OCI-LY7 (cell line): ENCODE measurements at regions of chr10 and their contacts with region 1.

Region 1: GRCh38 chr10:37976091-37976879 is at the start of gene ZNF25:
- DNase-seq: peak; percentile 99
- H3K4me3 ChIP-seq: peak within 1 kb of the TSS; percentile 82
- H3K27ac ChIP-seq: peak within 1 kb of the TSS; percentile 78
- H3K4me1 ChIP-seq: peaks cover 17% of the 10 kb centered on the region
- CTCF ChIP-seq: peak; percentile 91
- total RNA-seq, gene ZNF25: 2.2 and 2.4 TPM in 2 replicates

Region 2: DNA sequence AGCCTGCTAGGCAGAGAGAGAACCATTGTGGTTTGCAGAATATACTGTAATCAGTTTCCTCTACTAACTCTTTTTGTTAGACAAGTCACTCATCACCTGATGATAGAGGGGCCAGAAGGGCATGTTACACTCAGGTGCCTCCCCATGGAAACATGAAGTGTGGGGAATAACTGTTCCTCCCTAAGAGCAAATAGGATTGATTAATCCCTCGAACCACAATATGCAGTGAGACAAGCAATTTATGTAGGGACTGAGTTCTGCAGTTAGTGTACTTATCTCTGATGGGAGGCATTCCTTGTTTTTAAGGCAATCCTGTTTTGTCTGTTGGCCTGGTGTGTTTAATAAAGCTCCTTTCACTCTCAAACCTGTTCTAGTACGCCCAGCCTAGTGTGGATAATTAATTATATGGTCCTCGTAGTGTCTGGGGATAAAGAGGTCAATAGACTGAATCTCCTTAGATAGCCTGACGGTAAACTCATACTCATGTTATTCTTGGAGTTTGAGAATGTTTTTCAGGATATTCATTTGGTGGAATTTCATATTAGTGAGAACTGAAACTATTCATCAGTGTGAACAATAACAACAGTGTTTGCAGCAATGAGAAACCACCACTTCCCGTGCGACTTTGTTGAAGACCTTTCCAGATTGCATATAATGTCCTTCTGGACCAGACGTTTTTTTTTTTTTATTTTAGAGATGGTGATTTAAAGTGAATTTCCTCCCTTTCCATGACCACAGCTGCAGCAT is 1989.4 kb before region 1 on chr10:
- CTCF ChIA-PET with region 1: no interaction called
- POLR2A ChIA-PET with region 1: no interaction called
- intact Hi-C with region 1: no loop called
- DNase-seq: no peak
- H3K4me3 ChIP-seq: no peak overlapping the region
- H3K27ac ChIP-seq: no peak overlapping the region
- H3K4me1 ChIP-seq: no peaks in the 10 kb centered on the region
- CTCF ChIP-seq: no peak

Region 3: DNA sequence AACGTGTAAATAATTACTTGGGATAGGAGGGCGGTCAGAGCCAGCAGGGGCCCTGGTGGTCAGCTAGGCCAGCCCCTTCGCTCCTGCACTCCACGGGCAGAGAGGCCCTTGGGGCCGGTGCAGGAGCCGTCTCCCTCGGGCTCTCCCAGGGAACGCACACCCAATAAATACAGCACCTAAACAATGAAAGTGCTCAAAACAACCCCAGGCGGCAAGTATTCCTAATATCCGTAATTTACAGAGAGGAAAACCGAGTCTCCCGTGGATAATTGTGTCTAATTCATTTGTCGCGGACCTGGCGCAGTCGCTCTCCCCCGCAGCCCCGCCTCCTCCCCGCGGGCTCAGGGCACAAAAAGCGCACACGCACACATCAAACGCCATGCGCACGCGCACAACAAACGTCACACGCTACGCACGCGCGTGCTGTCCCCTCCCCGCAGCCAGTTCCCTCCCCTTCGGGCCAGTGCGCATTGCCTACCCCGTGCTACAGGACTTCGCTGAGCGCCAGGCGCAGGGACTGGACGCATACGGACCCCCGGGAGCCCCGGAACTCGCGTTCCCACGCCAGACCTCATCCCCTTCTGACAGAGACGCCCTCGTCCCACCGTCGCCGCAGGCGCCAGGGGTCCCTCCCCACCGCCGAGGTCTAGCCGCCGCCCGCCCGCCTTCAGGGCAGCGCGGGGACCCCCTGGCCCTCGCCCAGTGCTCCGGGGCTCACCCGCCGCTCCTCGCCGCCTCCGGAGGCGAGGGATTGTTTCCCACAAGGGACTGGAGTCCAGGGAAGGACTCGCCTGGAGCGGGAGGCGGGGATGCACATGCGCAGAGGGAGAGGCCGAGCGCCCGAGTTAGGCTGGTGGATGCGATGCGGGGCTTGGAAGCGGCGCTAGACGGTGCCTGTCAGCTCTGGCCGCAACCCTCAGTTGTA is 118.7 kb before region 1 on chr10 and contains the start of gene ZNF248:
- CTCF ChIA-PET with region 1: no interaction called
- POLR2A ChIA-PET with region 1: interaction called, 7 read pairs
- intact Hi-C with region 1: loop called (anchors 1 kb)
- DNase-seq: peak; percentile 97
- H3K4me3 ChIP-seq: peak within 1 kb of the TSS; percentile 84
- H3K27ac ChIP-seq: peak within 1 kb of the TSS; percentile 24
- H3K4me1 ChIP-seq: peaks cover 34% of the 10 kb centered on the region
- CTCF ChIP-seq: no peak
- total RNA-seq, gene ZNF248: 13.4 and 16.8 TPM in 2 replicates

Region 4: DNA sequence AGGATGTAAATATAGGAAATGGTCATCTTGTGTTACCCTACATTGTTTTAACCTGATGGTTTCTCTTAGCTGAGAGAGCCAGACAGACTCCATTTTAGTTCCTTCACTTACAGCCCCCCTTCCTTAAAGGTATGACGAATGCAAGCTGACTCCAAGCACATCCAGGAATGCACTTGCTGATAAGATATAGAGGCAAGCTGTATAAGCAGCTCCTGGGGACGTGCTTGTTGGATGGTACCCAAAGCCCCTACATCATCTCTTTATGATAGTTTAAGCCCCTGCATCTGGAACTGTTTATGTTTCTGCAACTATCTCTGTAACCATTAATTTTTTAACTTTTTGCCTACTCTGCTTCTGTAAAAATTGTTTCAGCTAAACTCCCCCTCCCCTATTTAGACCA is 41.5 kb before region 1 on chr10:
- CTCF ChIA-PET with region 1: no interaction called
- POLR2A ChIA-PET with region 1: no interaction called
- intact Hi-C with region 1: no loop called
- DNase-seq: no peak
- H3K4me3 ChIP-seq: no peak overlapping the region
- H3K27ac ChIP-seq: no peak overlapping the region
- H3K4me1 ChIP-seq: no peaks in the 10 kb centered on the region
- CTCF ChIP-seq: no peak

Region 5: DNA sequence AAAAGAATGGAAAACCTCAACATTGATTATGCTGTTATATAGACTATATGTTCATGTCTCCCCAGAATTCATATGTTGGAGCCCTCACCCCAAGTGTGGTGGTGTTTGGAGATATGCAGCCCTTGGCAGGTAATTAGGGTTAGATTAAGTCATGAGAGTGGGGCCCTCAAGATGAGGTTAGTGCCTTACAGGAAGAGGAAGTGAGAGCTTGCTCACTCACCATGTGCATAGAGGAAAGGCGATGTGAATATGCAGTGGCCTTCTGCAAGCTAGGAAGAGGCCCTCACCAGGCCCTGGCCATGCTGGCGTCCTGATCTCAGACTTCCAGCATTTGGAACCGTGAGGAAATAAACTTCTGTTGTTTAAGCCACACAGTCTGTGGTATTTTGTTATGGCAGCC is 49.0 kb after region 1 on chr10:
- CTCF ChIA-PET with region 1: no interaction called
- POLR2A ChIA-PET with region 1: interaction called, 5 read pairs
- intact Hi-C with region 1: loop called (anchors 5 kb)
- DNase-seq: peak; percentile 71
- H3K4me3 ChIP-seq: no peak overlapping the region
- H3K27ac ChIP-seq: peak overlapping the region; percentile 40
- H3K4me1 ChIP-seq: peaks cover 18% of the 10 kb centered on the region
- CTCF ChIP-seq: no peak

Region 6: DNA sequence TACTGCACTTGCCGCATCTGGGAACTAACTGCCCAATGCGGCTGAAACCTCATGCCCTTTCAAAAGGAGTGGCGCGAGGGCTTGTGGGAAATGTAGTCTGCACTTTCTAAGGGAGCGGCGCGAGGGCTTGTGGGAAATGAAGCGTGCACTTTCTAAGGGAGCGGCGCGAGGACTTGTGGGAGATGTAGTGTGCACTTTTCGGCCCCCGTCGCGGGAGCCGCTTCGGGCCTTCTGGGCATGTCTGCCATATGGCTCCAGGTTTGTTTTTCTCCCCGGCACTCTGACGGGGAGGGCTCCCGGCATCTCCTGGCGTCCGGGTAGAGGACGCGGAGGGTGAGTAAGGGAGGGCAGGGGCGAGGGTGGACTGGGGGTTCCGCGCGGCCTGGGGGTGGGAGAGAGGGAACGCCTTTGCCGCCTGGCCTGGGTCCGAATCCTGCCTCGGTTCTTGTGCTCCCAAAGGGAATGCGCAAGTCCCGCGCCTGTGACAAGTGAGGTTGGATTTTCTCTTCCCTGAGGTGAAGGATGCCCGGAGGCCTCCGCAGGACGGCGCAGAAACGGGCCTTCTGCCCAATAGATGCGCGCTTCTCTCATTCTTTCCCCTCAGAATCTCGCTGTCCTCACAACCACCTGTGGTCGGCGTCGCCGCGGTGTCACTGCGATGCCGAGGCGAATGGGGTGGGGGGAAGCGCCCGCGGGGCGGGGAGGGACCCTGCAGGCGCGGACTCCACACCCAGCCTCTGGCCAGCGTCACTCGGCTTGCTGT is 118.1 kb after region 1 on chr10 and contains the start of gene ZNF37A:
- CTCF ChIA-PET with region 1: interaction called, 3 read pairs
- POLR2A ChIA-PET with region 1: interaction called, 13 read pairs
- intact Hi-C with region 1: loop called (anchors 1 kb)
- DNase-seq: peak; percentile 96
- H3K4me3 ChIP-seq: peak within 1 kb of the TSS; percentile 81
- H3K27ac ChIP-seq: peak within 1 kb of the TSS; percentile 28
- H3K4me1 ChIP-seq: peaks cover 12% of the 10 kb centered on the region
- CTCF ChIP-seq: no peak
- total RNA-seq, gene ZNF37A: 21.2 and 21.6 TPM in 2 replicates